ENCODE measurements at regions of chr6 and their contacts with region 1.

Region 1: GRCh38 chr6:188821-189655 is 103.2 kb upstream of the DUSP22 start:
- DNase-seq: peak; percentile 52 to 88 (median 59)
- H3K4me3 ChIP-seq: no peak overlapping the region
- H3K4me3 Mint-ChIP-seq: peak overlapping the region in 4 of 7 donors; percentile 29 to 59 (median 44)
- H3K27ac ChIP-seq: no peak overlapping the region
- H3K27ac Mint-ChIP-seq: peak overlapping the region in 6 of 8 donors; percentile 1 to 81 (median 56)
- H3K4me1 ChIP-seq: peaks cover 30% of the 10 kb centered on the region
- H3K4me1 Mint-ChIP-seq: peaks cover 30 to 41% (median 39%) of the 10 kb centered on the region in 3 donors
- H3K27me3 ChIP-seq: no peaks in the 10 kb centered on the region
- H3K27me3 Mint-ChIP-seq: peaks cover 0 to 2% of the 10 kb centered on the region in 2 donors

Region 2: DNA sequence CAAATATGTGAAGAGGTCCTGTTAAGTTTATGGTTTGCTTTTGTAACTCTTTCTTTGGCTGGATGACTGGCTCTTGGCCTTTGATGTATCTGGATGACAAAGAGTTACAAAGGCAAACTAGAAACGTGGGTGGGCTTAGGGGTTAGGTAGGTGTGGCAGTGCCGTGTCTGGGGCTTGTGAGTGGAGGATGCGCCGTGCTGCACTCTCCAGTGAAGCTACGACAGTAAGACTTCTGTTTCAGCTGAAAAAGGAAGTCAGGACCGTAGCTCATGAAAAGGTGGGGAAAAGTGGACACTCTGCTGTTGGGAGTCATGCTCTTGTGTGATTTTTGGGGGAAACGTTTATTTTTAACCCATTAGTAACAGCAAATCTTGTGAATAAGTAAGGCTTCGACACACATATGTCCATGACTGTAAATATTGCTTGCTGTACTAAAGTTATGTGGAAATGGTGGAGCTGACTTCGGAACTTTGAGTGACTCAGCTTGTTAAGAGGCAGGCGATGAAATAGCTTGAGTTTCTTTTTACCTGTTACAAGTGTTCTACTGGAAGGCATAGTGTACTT is 148.8 kb after region 1 on chr6:
- CTCF ChIA-PET with region 1: interaction called, 11 read pairs
- POLR2A ChIA-PET with region 1: no interaction called
- DNase-seq: peak in 1 of 5 donors; percentile 41
- H3K4me3 ChIP-seq: peak overlapping the region; percentile 1
- H3K4me3 Mint-ChIP-seq: peak overlapping the region in 5 of 7 donors; percentile 14 to 76 (median 51)
- H3K27ac ChIP-seq: no peak overlapping the region
- H3K27ac Mint-ChIP-seq: peak overlapping the region in 6 of 8 donors; percentile 11 to 77 (median 44)
- H3K4me1 ChIP-seq: peaks cover 44% of the 10 kb centered on the region
- H3K4me1 Mint-ChIP-seq: peaks cover 56 to 71% (median 62%) of the 10 kb centered on the region in 3 donors
- H3K27me3 ChIP-seq: no peaks in the 10 kb centered on the region
- H3K27me3 Mint-ChIP-seq: peaks cover 0 to 3% of the 10 kb centered on the region in 2 donors

Region 3: GRCh38 chr6:391559-392440 is 202.8 kb after region 1 on chr6 and contains the start of gene IRF4:
- CTCF ChIA-PET with region 1: interaction called, 27 read pairs
- POLR2A ChIA-PET with region 1: interaction called, 3 read pairs
- DNase-seq: peak in 4 of 5 donors; percentile 20 to 26 (median 26)
- H3K4me3 ChIP-seq: peak within 1 kb of the TSS; percentile 79
- H3K4me3 Mint-ChIP-seq: peak within 1 kb of the TSS; percentile 91 to 99 (median 95)
- H3K27ac ChIP-seq: no peak within 1 kb of the TSS
- H3K27ac Mint-ChIP-seq: peak within 1 kb of the TSS in 6 of 8 donors; percentile 73 to 88 (median 80)
- H3K4me1 ChIP-seq: peaks cover 28% of the 10 kb centered on the region
- H3K4me1 Mint-ChIP-seq: peaks cover 24 to 34% (median 31%) of the 10 kb centered on the region in 3 donors
- H3K27me3 ChIP-seq: no peaks in the 10 kb centered on the region
- H3K27me3 Mint-ChIP-seq: peaks cover 5 to 9% of the 10 kb centered on the region in 2 donors
- total RNA-seq, gene IRF4: 700 to 703 TPM